Naive thymus-derived CD4-positive, alpha-beta T cell (primary cell): ENCODE measurements at regions of chr15 and their contacts with region 1.

Region 1: GRCh38 chr15:58269455-58270414 is 131.6 kb downstream of the AQP9 start:
- DNase-seq: peak in 7 of 9 donors; percentile 13 to 56 (median 37)
- ATAC-seq: peak; percentile 81
- H3K4me3 ChIP-seq: no peak overlapping the region
- H3K4me3 Mint-ChIP-seq: no peak overlapping the region
- H3K27ac ChIP-seq: no peak overlapping the region
- H3K27ac Mint-ChIP-seq: peak overlapping the region in 5 of 9 donors; percentile 10 to 78 (median 52)
- H3K4me1 ChIP-seq: peaks cover 0 to 5% of the 10 kb centered on the region in 2 donors
- H3K4me1 Mint-ChIP-seq: peaks cover 6 to 14% (median 13%) of the 10 kb centered on the region in 7 donors
- H3K27me3 ChIP-seq: no peaks in the 10 kb centered on the region
- H3K27me3 Mint-ChIP-seq: peaks cover 0 to 6% (median 0%) of the 10 kb centered on the region in 5 donors

Region 2: DNA sequence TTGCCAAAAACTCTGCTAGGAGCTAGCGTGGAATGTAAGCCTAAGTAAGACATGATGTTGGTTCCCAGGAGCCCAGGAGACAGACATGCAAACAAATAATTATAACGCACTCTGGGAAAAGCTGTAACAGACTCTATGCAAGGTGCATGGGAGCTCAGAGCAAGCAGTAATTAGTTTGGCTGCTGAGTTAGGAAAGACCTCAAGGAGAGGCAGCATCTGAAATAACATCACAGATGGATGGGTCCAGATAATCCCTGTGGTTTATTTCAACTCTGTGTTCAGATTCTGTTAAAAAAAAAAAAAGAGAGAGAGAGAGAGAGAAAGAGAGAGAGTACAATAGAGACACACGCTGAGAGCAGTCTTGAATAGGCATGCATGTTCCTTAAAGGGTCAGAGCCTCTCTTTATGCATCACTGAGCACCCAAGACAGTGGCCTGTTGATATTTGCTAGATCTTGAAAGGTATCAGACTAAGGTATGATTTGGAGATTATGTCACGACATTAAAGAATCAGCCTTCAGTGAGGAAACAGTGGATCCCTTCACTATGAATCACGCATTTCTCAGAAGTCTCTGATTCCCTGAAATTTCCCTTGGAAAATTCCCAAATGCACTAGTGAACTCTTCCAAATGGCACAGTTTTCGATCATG is 37.7 kb after region 1 on chr15:
- CTCF ChIA-PET with region 1: no interaction called
- POLR2A ChIA-PET with region 1: no interaction called
- intact Hi-C with region 1: no loop called
- DNase-seq: no peak
- ATAC-seq: no peak
- H3K4me3 ChIP-seq: no peak overlapping the region
- H3K4me3 Mint-ChIP-seq: no peak overlapping the region
- H3K27ac ChIP-seq: no peak overlapping the region
- H3K27ac Mint-ChIP-seq: peak overlapping the region in 1 of 9 donors; percentile 32
- H3K4me1 ChIP-seq: no peaks in the 10 kb centered on the region
- H3K4me1 Mint-ChIP-seq: peaks cover 8 to 51% (median 31%) of the 10 kb centered on the region in 7 donors
- H3K27me3 ChIP-seq: no peaks in the 10 kb centered on the region
- H3K27me3 Mint-ChIP-seq: no peaks in the 10 kb centered on the region

Region 3: GRCh38 chr15:58410353-58410752 is 140.6 kb after region 1 on chr15:
- CTCF ChIA-PET with region 1: no interaction called
- POLR2A ChIA-PET with region 1: no interaction called
- intact Hi-C with region 1: loop called in 1 of 2 experiments (anchors 10 kb)
- DNase-seq: peak in 7 of 9 donors; percentile 30 to 59 (median 47)
- ATAC-seq: peak; percentile 69
- H3K4me3 ChIP-seq: peak overlapping the region; percentile 29
- H3K4me3 Mint-ChIP-seq: peak overlapping the region; percentile 77 to 96 (median 89)
- H3K27ac ChIP-seq: peak overlapping the region; percentile 57
- H3K27ac Mint-ChIP-seq: peak overlapping the region; percentile 53 to 95 (median 92)
- H3K4me1 ChIP-seq: no peaks in the 10 kb centered on the region
- H3K4me1 Mint-ChIP-seq: peaks cover 6 to 39% (median 30%) of the 10 kb centered on the region in 7 donors
- H3K27me3 ChIP-seq: no peaks in the 10 kb centered on the region
- H3K27me3 Mint-ChIP-seq: no peaks in the 10 kb centered on the region

Region 4: DNA sequence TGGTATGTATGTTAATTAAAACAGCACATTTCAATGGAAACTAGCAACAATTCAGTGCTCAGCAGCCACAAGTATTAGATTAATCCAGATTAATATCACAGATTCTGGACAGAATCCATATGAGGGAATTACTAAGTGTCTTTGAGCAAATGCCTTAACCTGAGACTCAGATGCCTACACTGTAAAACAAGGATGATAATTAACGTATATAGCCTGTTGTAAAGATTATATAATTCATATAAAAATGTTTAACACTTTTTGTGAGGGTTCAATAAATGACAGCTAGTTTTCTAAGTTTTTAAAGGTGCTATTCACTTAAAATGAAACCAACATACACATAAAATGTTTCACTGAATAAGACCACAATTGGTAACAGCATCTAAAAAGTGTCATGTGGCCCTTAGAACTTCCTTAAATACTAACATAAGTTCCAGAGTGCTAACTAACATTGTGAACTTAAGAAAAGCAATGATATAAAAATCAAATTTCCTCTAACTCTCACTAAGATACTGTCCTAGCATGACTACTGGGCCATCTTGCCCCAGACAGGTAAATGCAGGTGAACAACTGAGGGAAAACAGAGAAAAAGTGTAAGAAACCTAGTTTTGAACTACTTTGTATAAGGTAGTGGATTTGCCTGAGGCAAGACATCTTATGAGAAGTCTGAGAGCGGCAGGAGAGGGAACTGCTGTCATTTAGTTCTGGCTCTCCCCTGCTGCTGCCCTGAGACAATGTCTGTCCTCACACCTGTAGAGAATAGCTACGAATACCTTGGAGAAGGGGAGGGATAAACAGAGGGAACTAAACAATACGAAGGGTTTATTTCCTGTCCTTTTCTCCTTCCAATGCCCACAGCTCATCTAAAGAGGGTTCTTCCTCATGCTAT is 328.5 kb after region 1 on chr15:
- CTCF ChIA-PET with region 1: no interaction called
- POLR2A ChIA-PET with region 1: no interaction called
- intact Hi-C with region 1: no loop called
- DNase-seq: no peak
- ATAC-seq: no peak
- H3K4me3 ChIP-seq: no peak overlapping the region
- H3K4me3 Mint-ChIP-seq: no peak overlapping the region
- H3K27ac ChIP-seq: no peak overlapping the region
- H3K27ac Mint-ChIP-seq: peak overlapping the region in 6 of 9 donors; percentile 20 to 72 (median 60)
- H3K4me1 ChIP-seq: no peaks in the 10 kb centered on the region
- H3K4me1 Mint-ChIP-seq: peaks cover 0 to 38% (median 3%) of the 10 kb centered on the region in 7 donors
- H3K27me3 ChIP-seq: no peaks in the 10 kb centered on the region
- H3K27me3 Mint-ChIP-seq: no peaks in the 10 kb centered on the region

Region 5: DNA sequence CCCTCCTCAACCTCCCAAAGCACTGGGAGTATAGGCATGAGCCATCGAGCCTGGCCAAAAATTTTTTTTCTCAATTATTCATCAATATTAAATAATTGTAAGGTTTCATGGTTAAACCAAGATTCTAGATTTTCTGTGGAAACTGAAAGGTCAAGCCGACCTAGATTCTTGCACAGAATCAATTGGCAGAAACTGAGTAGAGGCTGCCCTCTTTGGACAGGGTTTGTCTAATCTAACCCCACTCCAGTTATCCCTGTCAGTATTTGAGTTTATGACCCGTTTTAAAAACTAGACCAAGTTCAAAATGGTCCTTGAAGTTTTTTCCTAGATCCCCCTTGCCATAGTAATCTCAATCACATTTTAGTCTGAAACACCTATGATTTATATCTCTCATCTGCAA is 488.4 kb after region 1 on chr15:
- CTCF ChIA-PET with region 1: interaction called, 4 read pairs
- POLR2A ChIA-PET with region 1: no interaction called
- intact Hi-C with region 1: loop called (anchors 1 to 2 kb)
- DNase-seq: no peak
- ATAC-seq: no peak
- H3K4me3 ChIP-seq: no peak overlapping the region
- H3K4me3 Mint-ChIP-seq: no peak overlapping the region
- H3K27ac ChIP-seq: no peak overlapping the region
- H3K27ac Mint-ChIP-seq: no peak overlapping the region
- H3K4me1 ChIP-seq: no peaks in the 10 kb centered on the region
- H3K4me1 Mint-ChIP-seq: peaks cover 0 to 8% (median 0%) of the 10 kb centered on the region in 7 donors
- H3K27me3 ChIP-seq: no peaks in the 10 kb centered on the region
- H3K27me3 Mint-ChIP-seq: no peaks in the 10 kb centered on the region